H1 (cell line): ENCODE measurements at regions of chr5 and their contacts with region 1.

Region 1: GRCh38 chr5:17132444-17133083 is 84.9 kb upstream of the BASP1 start:
- DNase-seq: no peak
- H3K4me3 ChIP-seq: peak overlapping the region in 1 of 4 experiments; percentile 6; a peak in 1 of 8 replicates
- H3K27ac ChIP-seq: no peak overlapping the region
- H3K4me1 ChIP-seq: peaks cover 0 to 5% (median 1%) of the 10 kb centered on the region in 4 experiments; a peak in 2 of 7 replicates
- H3K27me3 ChIP-seq: no peaks in the 10 kb centered on the region
- CTCF ChIP-seq: peak in 2 of 3 experiments; percentile 24 to 49; a peak in 2 of 4 replicates
- EP300 ChIP-seq: no peak
- POLR2A ChIP-seq: no peak
- RAD21 ChIP-seq: peak; percentile 39 to 48; a peak in 3 of 4 replicates

Region 2: GRCh38 chr5:16791036-16791705 is 341.4 kb before region 1 on chr5:
- CTCF ChIA-PET with region 1: interaction called, 27 read pairs
- POLR2A ChIA-PET with region 1: no interaction called
- DNase-seq: no peak
- H3K4me3 ChIP-seq: no peak overlapping the region
- H3K27ac ChIP-seq: no peak overlapping the region
- H3K4me1 ChIP-seq: peaks cover 0 to 2% (median 0%) of the 10 kb centered on the region in 4 experiments; a peak in 2 of 7 replicates
- H3K27me3 ChIP-seq: no peaks in the 10 kb centered on the region
- CTCF ChIP-seq: peak in 2 of 3 experiments; percentile 55 to 56; a peak in 3 of 4 replicates
- EP300 ChIP-seq: no peak
- POLR2A ChIP-seq: no peak
- RAD21 ChIP-seq: peak; percentile 80 to 81

Region 3: DNA sequence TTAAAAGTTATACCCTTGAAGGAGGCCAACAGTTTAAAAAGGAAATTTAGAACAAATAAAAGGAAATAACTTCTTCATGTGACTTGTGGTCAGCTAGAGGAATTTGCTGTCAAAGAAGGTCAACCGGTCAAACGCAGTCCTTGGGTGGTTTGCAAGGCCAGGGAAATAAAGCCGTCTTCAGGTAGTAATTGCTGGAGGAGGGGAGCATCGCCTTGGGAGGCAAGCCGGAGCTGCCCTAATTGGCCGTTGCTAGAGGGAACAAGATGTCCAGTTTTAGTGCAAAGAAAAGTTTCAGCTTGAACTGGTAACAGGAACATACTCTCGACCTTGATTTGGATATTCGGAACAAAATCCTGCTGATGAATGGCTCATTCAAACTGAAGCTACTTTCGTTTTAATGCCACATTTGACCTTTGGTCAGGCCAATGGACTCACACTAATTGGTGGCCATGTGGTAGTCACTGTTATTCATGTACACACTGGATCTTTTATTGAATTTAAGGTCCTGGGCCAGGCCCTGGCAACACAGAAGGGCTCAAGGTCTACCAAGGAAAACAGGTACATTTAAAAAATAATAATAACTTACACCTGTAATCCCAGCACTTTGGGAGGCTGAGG is 149.4 kb before region 1 on chr5:
- CTCF ChIA-PET with region 1: no interaction called
- POLR2A ChIA-PET with region 1: no interaction called
- DNase-seq: no peak
- H3K4me3 ChIP-seq: no peak overlapping the region
- H3K27ac ChIP-seq: no peak overlapping the region
- H3K4me1 ChIP-seq: no peaks in the 10 kb centered on the region
- H3K27me3 ChIP-seq: no peaks in the 10 kb centered on the region
- CTCF ChIP-seq: no peak
- EP300 ChIP-seq: no peak
- POLR2A ChIP-seq: no peak
- RAD21 ChIP-seq: no peak

Region 4: GRCh38 chr5:17018871-17019270 is 113.7 kb before region 1 on chr5:
- CTCF ChIA-PET with region 1: interaction called, 13 read pairs
- POLR2A ChIA-PET with region 1: no interaction called
- DNase-seq: no peak
- H3K4me3 ChIP-seq: no peak overlapping the region
- H3K27ac ChIP-seq: no peak overlapping the region
- H3K4me1 ChIP-seq: no peaks in the 10 kb centered on the region
- H3K27me3 ChIP-seq: no peaks in the 10 kb centered on the region
- CTCF ChIP-seq: no peak
- EP300 ChIP-seq: no peak
- POLR2A ChIP-seq: no peak
- RAD21 ChIP-seq: no peak

Region 5: DNA sequence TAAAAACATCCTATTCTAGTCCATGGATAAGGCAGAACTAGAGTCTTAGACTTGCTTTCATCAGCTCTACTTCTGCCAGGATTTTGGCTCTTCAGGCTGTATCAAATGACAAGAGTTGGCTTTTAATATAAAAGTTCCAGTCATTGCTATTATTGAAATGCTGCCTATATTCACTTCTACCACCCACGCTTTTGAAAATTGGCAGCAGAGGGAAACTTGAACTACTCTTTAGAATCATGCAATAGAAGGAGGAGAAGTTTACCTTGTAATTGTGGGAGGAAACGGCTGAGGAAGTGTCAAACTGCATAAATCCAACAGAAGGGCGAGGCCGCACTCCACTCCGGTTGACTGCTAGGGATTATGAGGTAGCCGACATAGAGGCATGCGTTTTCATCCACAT is 37.7 kb before region 1 on chr5:
- CTCF ChIA-PET with region 1: interaction called, 14 read pairs
- POLR2A ChIA-PET with region 1: no interaction called
- DNase-seq: no peak
- H3K4me3 ChIP-seq: no peak overlapping the region
- H3K27ac ChIP-seq: no peak overlapping the region
- H3K4me1 ChIP-seq: peaks cover 0 to 5% (median 3%) of the 10 kb centered on the region in 4 experiments; a peak in 2 of 7 replicates
- H3K27me3 ChIP-seq: no peaks in the 10 kb centered on the region
- CTCF ChIP-seq: no peak
- EP300 ChIP-seq: no peak
- POLR2A ChIP-seq: no peak
- RAD21 ChIP-seq: no peak

Region 6: GRCh38 chr5:17113163-17113958 is 19.2 kb before region 1 on chr5:
- CTCF ChIA-PET with region 1: interaction called, 38 read pairs
- POLR2A ChIA-PET with region 1: no interaction called
- DNase-seq: no peak
- H3K4me3 ChIP-seq: no peak overlapping the region
- H3K27ac ChIP-seq: no peak overlapping the region
- H3K4me1 ChIP-seq: peaks cover 1 to 9% (median 6%) of the 10 kb centered on the region in 4 experiments; a peak in 3 of 7 replicates
- H3K27me3 ChIP-seq: no peaks in the 10 kb centered on the region
- CTCF ChIP-seq: no peak
- EP300 ChIP-seq: no peak
- POLR2A ChIP-seq: no peak
- RAD21 ChIP-seq: no peak

Region 7: DNA sequence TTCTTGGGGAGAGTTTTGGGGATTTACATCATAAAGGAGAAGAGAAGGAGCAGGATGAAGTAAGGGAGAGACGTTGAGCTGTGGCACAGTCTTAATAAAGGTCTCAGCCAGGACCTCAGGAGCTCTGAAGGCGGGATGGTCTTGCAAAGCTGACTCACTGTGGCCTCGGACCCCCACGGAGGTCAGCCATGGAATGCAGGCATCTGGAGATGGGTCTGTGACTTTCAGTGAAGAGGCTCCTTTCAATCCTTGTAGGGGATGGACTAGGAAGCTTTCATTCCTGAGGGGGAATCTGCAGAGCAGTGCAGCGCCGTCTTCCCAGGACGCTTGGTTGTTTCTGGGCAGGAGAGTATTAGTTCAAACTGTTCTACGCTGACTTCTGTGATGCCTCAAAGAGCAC is 19.1 kb after region 1 on chr5:
- CTCF ChIA-PET with region 1: interaction called, 42 read pairs
- POLR2A ChIA-PET with region 1: no interaction called
- DNase-seq: peak in 1 of 2 experiments; percentile 17
- H3K4me3 ChIP-seq: no peak overlapping the region
- H3K27ac ChIP-seq: no peak overlapping the region
- H3K4me1 ChIP-seq: peaks cover 4 to 14% (median 9%) of the 10 kb centered on the region in 4 experiments; a peak in 6 of 7 replicates
- H3K27me3 ChIP-seq: peaks cover 0 to 2% (median 0%) of the 10 kb centered on the region in 4 experiments; a peak in 1 of 7 replicates
- CTCF ChIP-seq: no peak
- EP300 ChIP-seq: no peak
- POLR2A ChIP-seq: no peak
- RAD21 ChIP-seq: no peak

Region 8: GRCh38 chr5:17282283-17283120 is 149.9 kb after region 1 on chr5:
- CTCF ChIA-PET with region 1: no interaction called
- POLR2A ChIA-PET with region 1: no interaction called
- DNase-seq: no peak
- H3K4me3 ChIP-seq: peak overlapping the region in 1 of 4 experiments; percentile 32; a peak in 1 of 8 replicates
- H3K27ac ChIP-seq: no peak overlapping the region
- H3K4me1 ChIP-seq: peaks cover 0 to 2% (median 0%) of the 10 kb centered on the region in 4 experiments; a peak in 2 of 7 replicates
- H3K27me3 ChIP-seq: no peaks in the 10 kb centered on the region
- CTCF ChIP-seq: no peak
- EP300 ChIP-seq: no peak
- POLR2A ChIP-seq: no peak
- RAD21 ChIP-seq: no peak